Activated CD4-positive, alpha-beta T cell treated with anti-CD3 and anti-CD28 coated beads for 36 hours (primary cell): ENCODE measurements at regions of chr2 and their contacts with region 1.

Region 1: GRCh38 chr2:68925295-68925896 is 27.3 kb downstream of the GKN2 start:
- DNase-seq: peak; percentile 63
- ATAC-seq: peak; percentile 75
- H3K4me3 Mint-ChIP-seq: no peak overlapping the region
- H3K27ac Mint-ChIP-seq: no peak overlapping the region
- H3K4me1 Mint-ChIP-seq: peaks cover 4% of the 10 kb centered on the region
- H3K27me3 Mint-ChIP-seq: peaks cover 2% of the 10 kb centered on the region

Region 2: DNA sequence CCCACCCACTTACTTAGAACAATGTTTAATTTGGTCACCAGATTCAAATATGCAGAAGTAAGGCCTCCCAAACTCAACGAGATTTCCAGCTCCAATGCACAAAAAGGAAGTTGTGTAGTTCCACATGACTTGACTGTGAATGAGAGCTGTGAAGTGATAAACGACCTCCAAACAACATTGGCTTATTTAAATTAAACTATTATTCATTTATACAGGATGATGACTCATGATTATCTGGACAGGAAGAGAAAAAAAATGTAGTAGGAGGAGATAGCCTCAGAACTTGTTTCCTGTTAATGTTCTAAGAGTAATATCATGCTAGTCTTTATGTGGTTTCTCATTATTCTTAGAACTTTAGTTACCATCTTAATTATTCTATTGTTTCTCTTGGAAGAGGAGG is 1099.9 kb before region 1 on chr2:
- CTCF ChIA-PET with region 1: no interaction called
- POLR2A ChIA-PET with region 1: no interaction called
- intact Hi-C with region 1: no loop called
- DNase-seq: no peak
- ATAC-seq: no peak
- H3K4me3 Mint-ChIP-seq: no peak overlapping the region
- H3K27ac Mint-ChIP-seq: no peak overlapping the region
- H3K4me1 Mint-ChIP-seq: no peaks in the 10 kb centered on the region
- H3K27me3 Mint-ChIP-seq: no peaks in the 10 kb centered on the region

Region 3: GRCh38 chr2:68487773-68488355 is 437.5 kb before region 1 on chr2:
- CTCF ChIA-PET with region 1: interaction called, 15 read pairs
- POLR2A ChIA-PET with region 1: no interaction called
- intact Hi-C with region 1: loop called (anchors 2 to 5 kb)
- DNase-seq: no peak
- ATAC-seq: no peak
- H3K4me3 Mint-ChIP-seq: no peak overlapping the region
- H3K27ac Mint-ChIP-seq: no peak overlapping the region
- H3K4me1 Mint-ChIP-seq: peaks cover 3% of the 10 kb centered on the region
- H3K27me3 Mint-ChIP-seq: no peaks in the 10 kb centered on the region

Region 4: DNA sequence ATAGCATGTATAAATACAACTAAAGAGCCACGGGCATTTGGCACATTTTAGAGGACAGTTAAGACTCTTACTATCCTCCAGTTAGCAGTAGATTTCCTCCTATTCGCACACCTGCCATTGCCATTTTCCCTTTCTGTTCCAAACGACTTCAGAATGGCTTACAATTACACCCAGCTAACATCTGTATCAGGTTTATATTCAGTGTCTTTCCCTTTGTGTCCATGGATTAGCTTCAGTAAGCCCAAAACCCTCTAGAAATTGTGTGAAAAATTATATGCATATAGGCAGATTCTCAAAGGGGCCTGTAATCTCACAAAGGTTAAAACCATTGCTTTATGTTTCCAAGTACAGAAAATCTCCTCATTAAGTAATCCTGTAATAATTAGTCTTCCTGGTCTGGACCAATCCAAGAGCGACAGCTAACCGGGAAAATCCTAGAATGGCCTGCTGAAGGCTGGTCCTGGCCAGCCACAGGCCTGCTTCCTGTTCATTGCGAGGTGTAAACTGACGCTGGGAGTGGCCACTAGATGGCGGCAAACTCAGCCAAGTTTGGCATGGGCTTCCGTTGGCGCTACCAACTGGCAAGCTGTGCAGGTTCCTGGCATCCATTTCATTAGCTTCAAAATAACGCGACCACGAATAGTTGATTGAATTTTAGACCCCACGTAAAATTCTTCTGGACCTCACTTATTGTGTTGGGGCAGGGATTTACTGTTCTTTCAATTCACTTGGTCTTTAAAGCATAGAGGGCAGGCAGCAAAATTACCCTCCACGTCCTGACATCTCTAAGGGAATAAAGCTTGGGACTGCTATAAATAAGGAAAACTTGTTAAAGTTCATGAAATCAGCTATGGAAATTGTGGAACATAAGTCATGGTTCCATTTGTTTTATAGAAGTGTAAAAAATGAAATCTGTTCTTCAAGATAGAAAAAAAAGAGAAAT is 173.7 kb before region 1 on chr2:
- CTCF ChIA-PET with region 1: interaction called, 22 read pairs
- POLR2A ChIA-PET with region 1: no interaction called
- intact Hi-C with region 1: loop called in 1 of 2 experiments (anchors 1 kb)
- DNase-seq: peak; percentile 96
- ATAC-seq: peak; percentile 93
- H3K4me3 Mint-ChIP-seq: peak overlapping the region; percentile 20
- H3K27ac Mint-ChIP-seq: peak overlapping the region; percentile 84
- H3K4me1 Mint-ChIP-seq: peaks cover 87% of the 10 kb centered on the region
- H3K27me3 Mint-ChIP-seq: no peaks in the 10 kb centered on the region

Region 5: DNA sequence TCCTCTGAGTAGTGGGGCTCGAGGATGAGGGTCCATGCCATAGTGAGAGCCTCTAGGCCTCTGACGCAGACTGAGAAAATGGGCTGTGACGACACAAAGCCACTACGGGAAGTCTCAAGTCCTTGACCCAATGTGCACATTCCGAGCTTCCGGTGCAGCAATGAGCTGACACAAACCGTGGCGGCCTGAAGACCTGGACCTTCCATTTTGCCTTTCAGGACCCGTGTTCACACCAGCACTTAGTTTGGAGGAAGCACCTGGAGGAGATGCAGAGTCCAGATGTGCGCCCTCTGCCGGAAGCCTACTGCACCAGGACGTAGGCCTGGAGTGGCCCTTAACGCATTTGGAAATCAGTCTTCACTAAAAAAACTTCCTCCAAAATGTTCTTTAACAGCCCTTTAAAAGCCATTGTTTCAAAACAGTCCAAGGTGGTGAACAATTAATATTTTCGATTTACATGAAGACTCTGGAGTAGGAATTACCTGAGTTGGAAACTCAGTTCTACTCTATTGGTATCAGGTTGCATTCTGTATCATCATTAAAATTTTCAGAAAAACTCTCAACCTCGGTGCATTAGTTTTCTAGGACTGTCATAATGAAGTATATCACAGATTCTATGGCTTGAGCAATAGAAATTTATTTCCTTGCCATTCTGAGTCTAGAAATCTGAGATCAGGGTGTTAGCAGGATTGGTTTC is 88.1 kb before region 1 on chr2:
- CTCF ChIA-PET with region 1: interaction called, 54 read pairs
- POLR2A ChIA-PET with region 1: no interaction called
- intact Hi-C with region 1: loop called (anchors 1 to 2 kb)
- DNase-seq: peak; percentile 84
- ATAC-seq: peak; percentile 45
- H3K4me3 Mint-ChIP-seq: no peak overlapping the region
- H3K27ac Mint-ChIP-seq: peak overlapping the region; percentile 79
- H3K4me1 Mint-ChIP-seq: peaks cover 39% of the 10 kb centered on the region
- H3K27me3 Mint-ChIP-seq: no peaks in the 10 kb centered on the region

Region 6: DNA sequence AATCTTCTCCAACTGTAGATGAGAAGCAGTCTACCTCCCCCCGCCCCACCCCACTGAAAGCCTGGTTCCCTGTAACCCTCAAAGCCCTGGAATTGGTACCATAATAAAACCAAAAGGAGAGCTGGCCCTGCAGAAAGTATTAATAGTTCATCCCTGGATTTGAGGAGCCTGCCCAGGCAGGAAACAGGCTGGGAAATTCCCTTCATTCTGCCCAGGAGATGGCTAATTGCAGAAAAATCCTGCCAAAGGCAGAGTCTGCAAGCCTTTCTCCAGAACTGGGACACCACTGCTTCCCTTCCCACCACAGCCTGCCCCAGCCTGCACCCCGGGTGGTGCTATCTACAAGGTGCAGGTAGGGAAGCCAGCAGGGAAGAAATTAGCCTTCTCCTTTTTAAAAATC is 11.0 kb after region 1 on chr2:
- CTCF ChIA-PET with region 1: interaction called, 32 read pairs
- POLR2A ChIA-PET with region 1: no interaction called
- intact Hi-C with region 1: no loop called
- DNase-seq: no peak
- ATAC-seq: no peak
- H3K4me3 Mint-ChIP-seq: no peak overlapping the region
- H3K27ac Mint-ChIP-seq: no peak overlapping the region
- H3K4me1 Mint-ChIP-seq: peaks cover 6% of the 10 kb centered on the region
- H3K27me3 Mint-ChIP-seq: peaks cover 8% of the 10 kb centered on the region

Region 7: DNA sequence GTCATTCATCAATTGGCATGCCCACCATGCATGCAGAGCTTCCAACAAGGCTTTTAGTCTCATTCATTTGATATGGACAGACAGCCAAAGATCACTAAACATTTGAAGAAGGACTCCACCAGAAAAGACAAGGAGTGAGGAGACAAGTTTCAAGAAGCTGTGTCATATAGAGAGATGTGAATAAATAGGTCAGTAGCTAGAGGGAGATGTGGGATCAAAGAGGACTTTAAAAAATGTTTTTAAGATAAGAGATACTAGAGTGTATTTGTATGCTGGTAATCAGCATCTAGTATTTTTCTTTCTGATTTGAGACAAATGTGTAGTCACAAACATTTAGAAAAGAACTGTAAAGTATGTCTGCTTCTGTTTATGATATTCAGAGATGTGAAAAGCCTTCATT is 136.1 kb after region 1 on chr2:
- CTCF ChIA-PET with region 1: no interaction called
- POLR2A ChIA-PET with region 1: no interaction called
- intact Hi-C with region 1: no loop called
- DNase-seq: no peak
- ATAC-seq: no peak
- H3K4me3 Mint-ChIP-seq: no peak overlapping the region
- H3K27ac Mint-ChIP-seq: no peak overlapping the region
- H3K4me1 Mint-ChIP-seq: no peaks in the 10 kb centered on the region
- H3K27me3 Mint-ChIP-seq: peaks cover 54% of the 10 kb centered on the region